Breast epithelium (tissue), 4 donors: ENCODE measurements at regions of chr2 and their contacts with region 1.

Region 1: DNA sequence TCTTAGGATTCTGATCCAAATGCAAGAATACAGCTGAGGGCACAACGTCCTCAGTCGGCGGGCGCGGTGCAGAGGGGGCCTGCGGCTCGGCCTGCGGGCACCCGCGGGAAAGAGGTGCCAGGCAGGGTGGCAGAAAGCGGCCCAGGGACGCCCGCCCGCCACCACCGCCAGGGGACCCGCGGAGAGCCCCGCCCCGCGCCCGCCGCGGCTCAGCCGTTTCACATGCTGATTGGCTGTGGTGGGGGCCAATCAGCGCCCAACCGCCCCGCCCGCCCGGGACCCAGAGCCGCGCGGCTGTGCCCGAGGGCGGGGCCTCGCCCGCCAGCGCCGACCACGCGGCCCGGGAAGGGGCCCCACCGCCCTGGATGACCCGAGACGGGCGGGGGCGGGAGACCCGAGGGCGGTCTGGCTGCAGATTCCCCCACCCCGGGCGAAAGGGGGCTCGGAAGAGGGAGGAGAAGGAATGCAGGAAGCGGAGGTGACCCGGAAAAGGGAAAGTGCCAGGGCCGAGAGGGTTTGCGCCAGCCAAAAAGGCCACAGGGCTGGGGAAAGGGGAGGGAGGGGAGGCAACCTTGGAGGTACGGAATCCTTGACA is 8.0 kb downstream of the IRS1 start:
- DNase-seq: peak; percentile 88
- H3K4me3 ChIP-seq: peak overlapping the region; percentile 55 to 88 (median 87)
- H3K27ac ChIP-seq: peak overlapping the region; percentile 94 to 95
- H3K4me1 ChIP-seq: peaks cover 0 to 3% of the 10 kb centered on the region in 2 donors
- H3K27me3 ChIP-seq: no peaks in the 10 kb centered on the region
- CTCF ChIP-seq: peak; percentile 38 to 76 (median 64)
- POLR2A ChIP-seq: peak; percentile 21

Region 2: DNA sequence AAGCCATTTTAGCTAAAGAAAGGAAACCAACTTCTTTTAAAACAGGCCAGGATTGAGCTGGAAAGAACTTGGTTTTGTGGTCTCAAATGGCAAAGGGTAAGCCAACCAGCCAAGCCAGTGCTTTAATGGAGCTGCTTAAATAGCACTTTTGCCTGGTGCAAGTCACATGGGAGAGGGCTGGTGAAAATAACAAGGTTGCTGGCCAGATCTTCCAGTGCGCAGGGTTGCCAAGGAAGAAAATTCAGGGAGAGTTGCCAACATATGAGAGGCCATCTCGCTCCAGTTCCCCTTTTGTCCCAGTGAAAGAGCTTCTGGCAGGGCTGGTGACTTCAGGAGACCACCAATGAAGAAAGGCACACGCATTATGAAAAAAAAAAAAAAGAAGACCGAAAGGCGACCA is 49.2 kb before region 1 on chr2:
- intact Hi-C with region 1: loop called (anchors 10 kb)
- DNase-seq: peak in 1 of 2 donors; percentile 68
- H3K4me3 ChIP-seq: no peak overlapping the region
- H3K27ac ChIP-seq: peak overlapping the region; percentile 62 to 83
- H3K4me1 ChIP-seq: peaks cover 5 to 6% of the 10 kb centered on the region in 2 donors
- H3K27me3 ChIP-seq: no peaks in the 10 kb centered on the region
- CTCF ChIP-seq: no peak
- POLR2A ChIP-seq: no peak

Region 3: GRCh38 chr2:226818930-226819329 is 27.3 kb after region 1 on chr2:
- intact Hi-C with region 1: no loop called
- DNase-seq: no peak
- H3K4me3 ChIP-seq: no peak overlapping the region
- H3K27ac ChIP-seq: no peak overlapping the region
- H3K4me1 ChIP-seq: no peaks in the 10 kb centered on the region
- H3K27me3 ChIP-seq: no peaks in the 10 kb centered on the region
- CTCF ChIP-seq: no peak
- POLR2A ChIP-seq: no peak

Region 4: DNA sequence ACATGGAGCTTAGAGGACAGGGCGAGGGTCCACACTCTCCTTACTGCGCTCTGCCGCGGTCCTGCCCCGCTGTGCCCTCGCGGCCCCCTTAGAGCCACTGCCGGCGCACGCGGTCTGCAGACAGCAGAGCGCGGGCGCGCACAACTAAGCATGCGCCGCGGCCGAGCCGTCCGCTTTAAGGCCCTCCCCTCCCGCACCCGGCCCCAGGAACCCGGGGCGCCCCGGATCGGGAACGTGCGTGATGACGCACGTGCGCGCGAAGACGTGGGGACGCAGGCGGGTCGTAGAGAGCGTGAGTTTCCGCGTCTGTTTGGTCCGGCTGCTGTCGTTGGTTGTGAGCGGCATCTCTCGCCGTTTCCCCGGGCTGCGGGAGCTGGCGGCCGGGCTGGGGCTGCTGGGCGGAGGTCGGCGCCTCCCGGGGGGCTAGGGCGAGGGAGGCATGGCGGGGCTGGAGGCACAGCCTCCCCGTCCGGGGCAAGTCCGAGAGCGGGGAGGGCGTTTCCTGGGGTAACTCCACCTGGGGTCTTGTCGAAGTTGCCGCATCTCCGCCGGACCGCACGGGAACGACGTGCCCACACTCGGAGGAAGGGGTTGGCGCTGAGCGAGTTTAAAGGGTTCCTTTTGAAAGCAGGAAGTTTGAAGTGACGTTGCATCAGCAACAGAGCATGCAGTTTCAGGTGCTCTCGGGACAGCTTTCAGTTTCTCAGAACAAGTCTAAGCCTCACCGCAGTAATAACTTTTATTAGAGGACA is 44.4 kb after region 1 on chr2 and contains the start of gene RHBDD1:
- intact Hi-C with region 1: no loop called
- DNase-seq: peak; percentile 86 to 91
- H3K4me3 ChIP-seq: peak within 1 kb of the TSS; percentile 81 to 86 (median 85)
- H3K27ac ChIP-seq: peak within 1 kb of the TSS; percentile 99
- H3K4me1 ChIP-seq: peaks cover 0 to 8% of the 10 kb centered on the region in 2 donors
- H3K27me3 ChIP-seq: no peaks in the 10 kb centered on the region
- CTCF ChIP-seq: no peak
- POLR2A ChIP-seq: no peak
- total RNA-seq, gene RHBDD1: 17.9 to 46.2 (median 20.0) TPM